Posterior vena cava (tissue), 2 donors: ENCODE measurements at regions of chr5 and their contacts with region 1.

Region 1: GRCh38 chr5:158375531-158375930 is 516.6 kb upstream of the CLINT1 start:
- DNase-seq: no peak

Region 2: DNA sequence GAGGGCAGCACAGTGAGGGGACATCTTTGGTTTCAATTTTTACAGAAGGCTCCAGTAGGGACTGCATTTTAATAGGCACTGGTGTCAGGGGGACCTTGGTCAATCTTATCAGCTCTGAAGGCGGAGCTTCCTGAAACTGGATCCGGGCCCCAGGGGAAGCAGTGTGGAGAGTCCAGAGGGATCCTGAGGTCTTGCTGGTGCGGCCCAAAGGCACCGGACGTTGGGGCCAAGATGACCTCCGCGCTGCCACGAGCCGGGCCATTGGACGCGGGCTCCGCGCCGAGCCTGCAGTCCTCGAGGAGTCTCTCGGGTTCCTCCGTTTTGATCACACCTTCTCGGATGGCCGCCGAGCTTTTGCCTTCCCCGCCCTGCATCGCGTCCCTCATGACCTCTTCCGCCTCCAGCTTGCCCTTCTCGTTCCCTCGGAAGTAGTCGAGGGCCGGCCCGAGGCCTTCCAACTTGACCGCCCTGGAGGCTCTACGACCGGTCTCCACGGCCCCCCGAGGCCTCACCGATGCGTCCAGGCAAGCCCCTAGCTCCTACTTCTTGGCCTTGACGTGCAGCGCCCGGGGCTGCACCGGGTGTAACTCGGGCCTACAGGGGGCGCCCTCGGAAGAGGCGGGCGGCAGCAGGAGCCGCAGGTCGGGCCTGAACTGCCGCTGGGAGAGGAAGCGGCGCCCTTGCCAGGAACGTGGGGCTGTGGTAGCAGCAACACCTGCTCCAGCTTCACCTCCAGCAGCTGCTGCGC is 685.4 kb before region 1 on chr5:
- intact Hi-C with region 1: no loop called
- DNase-seq: no peak

Region 3: GRCh38 chr5:159833088-159833487 is 1457.6 kb after region 1 on chr5:
- intact Hi-C with region 1: loop called in 1 of 2 experiments (anchors 5 kb)
- DNase-seq: no peak